ENCODE measurements at regions of chr14 and their contacts with region 1.

Region 1: GRCh38 chr14:102591889-102592763 is at the start of gene RCOR1:
- H3K4me3 Mint-ChIP-seq: peak within 1 kb of the TSS; percentile 96
- H3K27ac Mint-ChIP-seq: peak within 1 kb of the TSS; percentile 98
- H3K4me1 Mint-ChIP-seq: peaks cover 35% of the 10 kb centered on the region
- H3K27me3 Mint-ChIP-seq: peaks cover 13% of the 10 kb centered on the region

Region 2: GRCh38 chr14:102437997-102438915 is 153.9 kb before region 1 on chr14:
- intact Hi-C with region 1: loop called (anchors 5 kb)
- H3K4me3 Mint-ChIP-seq: peak overlapping the region; percentile 39
- H3K27ac Mint-ChIP-seq: no peak overlapping the region
- H3K4me1 Mint-ChIP-seq: peaks cover 6% of the 10 kb centered on the region
- H3K27me3 Mint-ChIP-seq: no peaks in the 10 kb centered on the region

Region 3: GRCh38 chr14:102524466-102525218 is 67.5 kb before region 1 on chr14:
- intact Hi-C with region 1: loop called (anchors 2 kb)
- H3K4me3 Mint-ChIP-seq: peak overlapping the region; percentile 90
- H3K27ac Mint-ChIP-seq: peak overlapping the region; percentile 93
- H3K4me1 Mint-ChIP-seq: peaks cover 39% of the 10 kb centered on the region
- H3K27me3 Mint-ChIP-seq: peaks cover 17% of the 10 kb centered on the region

Region 4: GRCh38 chr14:102555264-102555831 is 36.8 kb before region 1 on chr14:
- intact Hi-C with region 1: loop called (anchors 5 kb)
- H3K4me3 Mint-ChIP-seq: peak overlapping the region; percentile 73
- H3K27ac Mint-ChIP-seq: peak overlapping the region; percentile 82
- H3K4me1 Mint-ChIP-seq: peaks cover 11% of the 10 kb centered on the region
- H3K27me3 Mint-ChIP-seq: peaks cover 8% of the 10 kb centered on the region

Region 5: DNA sequence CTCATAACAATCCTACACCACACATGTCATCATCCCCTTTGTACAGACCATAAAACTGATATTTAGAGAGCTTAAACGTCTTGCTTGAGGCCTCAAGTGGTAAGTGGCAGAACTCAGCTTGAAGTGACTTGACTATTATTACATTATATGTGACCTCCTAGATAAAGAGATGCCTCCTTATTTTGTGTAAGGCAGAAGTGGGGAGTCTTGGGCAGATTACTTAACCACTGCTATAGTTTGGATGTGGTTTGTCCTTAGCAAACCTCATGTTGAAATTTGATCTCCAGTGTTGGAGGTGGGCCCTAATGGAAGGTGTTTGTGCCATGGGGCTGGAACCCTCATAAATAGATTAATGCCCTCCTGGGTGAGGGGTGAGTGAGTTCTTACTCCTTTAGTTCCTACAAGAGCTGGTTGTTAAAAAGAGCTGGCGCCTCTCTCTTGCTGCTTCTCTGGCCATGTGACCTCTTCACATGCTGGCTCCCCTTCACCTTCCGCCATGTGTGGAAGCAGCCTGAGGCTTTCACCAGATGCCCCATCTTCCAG is 37.8 kb after region 1 on chr14:
- intact Hi-C with region 1: loop called (anchors 5 kb)
- H3K4me3 Mint-ChIP-seq: no peak overlapping the region
- H3K27ac Mint-ChIP-seq: no peak overlapping the region
- H3K4me1 Mint-ChIP-seq: peaks cover 65% of the 10 kb centered on the region
- H3K27me3 Mint-ChIP-seq: no peaks in the 10 kb centered on the region

Region 6: DNA sequence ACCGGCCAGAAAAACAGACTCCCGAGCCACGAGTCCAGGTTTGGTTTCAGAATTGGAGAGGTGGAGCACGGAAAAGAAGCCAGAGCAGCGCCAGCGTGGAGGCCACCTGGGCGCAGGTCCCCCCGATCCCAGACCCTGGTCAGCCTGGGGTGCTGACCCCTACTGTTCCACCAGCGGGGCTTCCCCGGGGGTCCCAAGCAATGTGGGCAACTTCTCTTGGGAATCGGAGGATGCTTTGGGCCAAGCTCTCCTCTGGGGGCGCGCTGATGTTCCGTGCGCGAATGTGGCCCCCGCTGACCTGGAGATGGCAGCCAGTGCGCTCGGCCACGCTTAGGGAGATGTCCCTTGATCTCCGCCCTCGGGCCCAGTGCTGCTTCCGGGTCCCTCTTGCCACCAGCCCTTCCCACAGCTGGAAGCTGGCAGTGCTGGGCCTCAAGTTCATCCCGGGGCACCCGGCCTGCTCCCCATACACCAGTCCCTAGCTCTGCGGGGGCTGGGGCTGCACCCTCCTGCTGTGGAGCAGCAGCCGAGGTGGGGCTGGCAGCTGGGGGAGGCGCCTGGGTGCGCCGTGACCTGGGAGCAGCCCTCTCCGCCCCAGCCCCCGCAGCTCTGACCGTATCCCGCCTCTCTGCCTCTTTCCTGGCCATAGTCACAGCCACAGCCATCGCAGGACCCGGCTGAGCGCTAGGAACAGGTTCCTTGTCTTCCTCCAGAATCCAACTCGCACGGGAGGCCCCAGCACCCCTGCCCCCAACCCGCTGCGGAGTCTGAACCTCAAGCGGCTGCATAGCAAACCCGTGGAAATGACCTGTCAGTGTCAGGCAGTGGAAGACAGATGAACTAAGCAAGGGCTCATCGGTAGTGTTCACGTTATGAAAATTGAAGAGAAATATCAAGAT is 91.5 kb after region 1 on chr14:
- intact Hi-C with region 1: loop called (anchors 5 kb)
- H3K4me3 Mint-ChIP-seq: no peak overlapping the region
- H3K27ac Mint-ChIP-seq: no peak overlapping the region
- H3K4me1 Mint-ChIP-seq: peaks cover 25% of the 10 kb centered on the region
- H3K27me3 Mint-ChIP-seq: no peaks in the 10 kb centered on the region

Region 7: GRCh38 chr14:102774391-102775153 is 182.4 kb after region 1 on chr14:
- intact Hi-C with region 1: loop called (anchors 5 kb)
- H3K4me3 Mint-ChIP-seq: peak overlapping the region; percentile 40
- H3K27ac Mint-ChIP-seq: peak overlapping the region; percentile 92
- H3K4me1 Mint-ChIP-seq: peaks cover 55% of the 10 kb centered on the region
- H3K27me3 Mint-ChIP-seq: peaks cover 2% of the 10 kb centered on the region